SK-N-SH (cell line): ENCODE measurements at regions of chr12 and their contacts with region 1.

Region 1: DNA sequence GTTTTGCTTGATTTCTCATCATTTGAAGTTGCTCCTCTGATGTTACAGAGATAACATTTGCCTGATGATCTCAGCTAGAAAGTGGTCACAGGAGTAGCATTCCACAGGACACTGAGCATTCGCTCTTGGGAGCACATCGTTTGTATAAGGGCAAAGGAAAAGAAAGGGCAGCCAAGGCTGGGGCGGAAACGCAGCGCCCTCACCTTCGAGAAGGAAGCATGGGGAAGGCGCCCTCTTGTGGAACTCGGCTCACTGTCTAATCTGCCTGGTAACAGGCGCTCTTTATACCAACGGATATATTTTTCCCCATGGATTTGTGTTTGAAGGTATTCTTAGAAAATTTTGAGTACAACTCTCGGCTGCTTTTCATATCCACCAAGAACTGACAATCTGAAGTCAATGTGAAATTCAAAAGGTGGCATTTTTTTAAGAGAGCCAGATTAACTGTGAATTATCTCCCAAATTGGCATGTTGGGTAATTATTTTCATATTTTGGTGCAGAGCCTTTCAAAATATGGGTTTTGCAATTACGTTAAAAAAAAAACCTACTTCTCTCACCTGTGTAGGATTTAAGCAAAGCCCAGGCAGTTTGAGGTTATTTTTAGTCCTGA is 172.7 kb downstream of the CAND1 start:
- DNase-seq: peak; percentile 65
- H3K4me3 ChIP-seq: no peak overlapping the region; a peak in 1 of 4 replicates
- H3K27ac ChIP-seq: peak overlapping the region in 1 of 2 experiments; percentile 15; a peak in 1 of 4 replicates
- H3K4me1 ChIP-seq: peaks cover 6 to 8% of the 10 kb centered on the region in 2 experiments; a peak in 3 of 4 replicates
- H3K27me3 ChIP-seq: no peaks in the 10 kb centered on the region
- CTCF ChIP-seq: peak; percentile 90
- EP300 ChIP-seq: 0 out of 4 replicates have a peak, but pooled peaks of 1 of the 2 experiments have one; percentile 24
- RAD21 ChIP-seq: peak; percentile 76

Region 2: GRCh38 chr12:67241482-67241881 is 200.4 kb before region 1 on chr12:
- CTCF ChIA-PET with region 1: no interaction called
- POLR2A ChIA-PET with region 1: no interaction called
- DNase-seq: no peak
- H3K4me3 ChIP-seq: no peak overlapping the region
- H3K27ac ChIP-seq: no peak overlapping the region
- H3K4me1 ChIP-seq: no peaks in the 10 kb centered on the region
- H3K27me3 ChIP-seq: no peaks in the 10 kb centered on the region
- CTCF ChIP-seq: no peak
- EP300 ChIP-seq: no peak
- RAD21 ChIP-seq: no peak

Region 3: GRCh38 chr12:67430708-67431335 is 11.0 kb before region 1 on chr12:
- CTCF ChIA-PET with region 1: interaction called, 14 read pairs
- POLR2A ChIA-PET with region 1: no interaction called
- DNase-seq: no peak
- H3K4me3 ChIP-seq: no peak overlapping the region
- H3K27ac ChIP-seq: no peak overlapping the region
- H3K4me1 ChIP-seq: peaks cover 8 to 18% of the 10 kb centered on the region in 2 experiments; a peak in 3 of 4 replicates
- H3K27me3 ChIP-seq: no peaks in the 10 kb centered on the region
- CTCF ChIP-seq: 0 out of 2 replicates have a peak, but pooled peaks have one; percentile 11
- EP300 ChIP-seq: no peak
- RAD21 ChIP-seq: peak; percentile 54